A673 (cell line): ENCODE measurements at regions of chr22 and their contacts with region 1.

Region 1: GRCh38 chr22:28009272-28009827 is 90.3 kb upstream of the PITPNB start:
- DNase-seq: peak; percentile 87
- H3K4me3 ChIP-seq: no peak overlapping the region
- H3K27ac ChIP-seq: no peak overlapping the region
- H3K4me1 ChIP-seq: no peaks in the 10 kb centered on the region
- H3K27me3 ChIP-seq: no peaks in the 10 kb centered on the region
- CTCF ChIP-seq: peak; percentile 99

Region 2: GRCh38 chr22:27405672-27406388 is 603.5 kb before region 1 on chr22:
- CTCF ChIA-PET with region 1: no interaction called
- POLR2A ChIA-PET with region 1: no interaction called
- intact Hi-C with region 1: loop called (anchors 10 kb)
- DNase-seq: peak; percentile 58
- H3K4me3 ChIP-seq: no peak overlapping the region
- H3K27ac ChIP-seq: no peak overlapping the region
- H3K4me1 ChIP-seq: peaks cover 16% of the 10 kb centered on the region
- H3K27me3 ChIP-seq: no peaks in the 10 kb centered on the region
- CTCF ChIP-seq: peak; percentile 78

Region 3: DNA sequence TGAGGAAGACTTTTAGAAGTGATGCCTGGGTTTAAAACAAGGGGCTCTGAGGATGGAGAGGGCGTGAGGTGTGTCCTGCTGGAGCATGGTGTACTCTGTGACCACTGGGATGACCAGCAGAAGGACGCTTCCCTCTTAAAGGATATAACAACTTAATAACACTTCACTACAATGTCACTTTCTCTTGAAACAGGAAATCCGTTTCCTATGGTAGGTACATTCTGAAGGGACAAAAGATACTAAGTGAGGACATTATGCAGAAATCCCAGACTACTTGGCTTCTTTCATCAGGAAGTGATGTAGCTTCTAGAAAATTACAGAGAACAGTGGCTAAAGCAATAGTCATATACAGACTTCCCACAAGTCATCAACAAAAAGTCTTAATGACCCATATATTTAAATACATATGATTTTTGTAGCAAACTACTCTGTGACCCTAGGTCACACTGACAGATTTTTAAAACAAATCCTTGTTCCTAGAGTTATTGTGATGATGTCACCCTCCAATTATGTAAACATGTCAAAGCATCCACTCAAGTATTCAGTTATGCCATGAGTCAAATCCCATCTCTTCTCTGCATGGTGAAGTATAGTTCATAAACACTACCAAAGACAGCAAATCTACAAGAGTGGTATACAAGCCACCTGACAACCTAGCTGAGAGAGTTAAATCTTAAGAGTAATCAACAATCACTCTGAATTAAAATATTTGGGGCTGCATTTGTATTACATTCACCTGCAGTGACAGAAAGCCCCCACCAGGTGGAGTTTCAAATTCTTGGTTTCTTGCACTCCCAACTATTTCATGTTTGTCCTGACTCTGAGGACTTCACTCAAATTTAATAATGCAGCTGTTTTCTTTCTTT is 123.1 kb before region 1 on chr22:
- CTCF ChIA-PET with region 1: no interaction called
- POLR2A ChIA-PET with region 1: no interaction called
- intact Hi-C with region 1: loop called (anchors 2 kb)
- DNase-seq: peak; percentile 59
- H3K4me3 ChIP-seq: no peak overlapping the region
- H3K27ac ChIP-seq: no peak overlapping the region
- H3K4me1 ChIP-seq: peaks cover 19% of the 10 kb centered on the region
- H3K27me3 ChIP-seq: no peaks in the 10 kb centered on the region
- CTCF ChIP-seq: peak; percentile 85

Region 4: DNA sequence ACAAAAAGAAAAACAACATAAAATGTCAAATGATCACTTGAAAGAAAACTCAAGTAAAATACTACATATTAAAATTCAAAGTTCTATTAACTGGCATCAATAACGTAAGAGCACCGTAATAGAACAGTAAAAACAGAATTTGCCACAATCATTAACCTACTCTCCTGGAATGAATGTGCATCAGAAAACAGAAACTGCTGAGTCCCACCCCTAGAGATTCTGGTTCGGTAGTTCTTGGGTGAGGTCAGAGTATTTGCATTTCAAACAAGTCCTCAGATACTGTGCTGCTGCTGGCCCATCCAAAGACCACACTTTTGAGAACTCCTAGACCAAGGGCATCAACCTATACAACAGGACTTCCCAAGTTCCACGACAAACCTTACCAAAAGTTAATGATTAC is 113.8 kb before region 1 on chr22:
- CTCF ChIA-PET with region 1: interaction called, 14 read pairs
- POLR2A ChIA-PET with region 1: no interaction called
- intact Hi-C with region 1: no loop called
- DNase-seq: no peak
- H3K4me3 ChIP-seq: no peak overlapping the region
- H3K27ac ChIP-seq: no peak overlapping the region
- H3K4me1 ChIP-seq: peaks cover 23% of the 10 kb centered on the region
- H3K27me3 ChIP-seq: no peaks in the 10 kb centered on the region
- CTCF ChIP-seq: no peak

Region 5: GRCh38 chr22:28120691-28121592 is 111.6 kb after region 1 on chr22:
- CTCF ChIA-PET with region 1: no interaction called
- POLR2A ChIA-PET with region 1: no interaction called
- intact Hi-C with region 1: no loop called
- DNase-seq: peak; percentile 63
- H3K4me3 ChIP-seq: no peak overlapping the region
- H3K27ac ChIP-seq: no peak overlapping the region
- H3K4me1 ChIP-seq: peaks cover 26% of the 10 kb centered on the region
- H3K27me3 ChIP-seq: no peaks in the 10 kb centered on the region
- CTCF ChIP-seq: no peak